Pancreas (tissue), 10 donors: ENCODE measurements at regions of chr20 and their contacts with region 1.

Region 1: DNA sequence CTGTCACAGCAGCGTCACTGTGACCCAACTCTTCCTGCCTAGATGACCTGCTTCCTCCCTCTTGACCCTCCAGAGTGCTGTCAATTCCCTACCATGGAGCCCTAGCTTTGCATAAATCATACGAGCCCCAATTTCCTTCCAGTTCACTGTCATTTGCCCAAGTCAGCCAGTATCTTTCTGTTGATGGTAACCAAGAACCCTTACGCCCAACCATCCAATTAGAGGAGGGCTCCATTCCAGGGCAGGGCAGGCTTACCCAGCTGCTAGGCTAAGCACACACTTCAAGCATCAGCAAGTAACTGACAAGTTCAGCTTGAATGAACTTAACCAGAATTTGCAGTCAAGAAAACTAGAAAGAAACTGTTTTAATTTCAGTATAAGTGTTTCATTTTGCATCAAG is 25.7 kb downstream of the WFDC3 start:
- DNase-seq: no peak
- ATAC-seq: no peak
- H3K4me3 ChIP-seq: no peak overlapping the region
- H3K27ac ChIP-seq: no peak overlapping the region
- H3K4me1 ChIP-seq: peaks cover 0 to 4% (median 0%) of the 10 kb centered on the region in 3 donors
- H3K27me3 ChIP-seq: no peaks in the 10 kb centered on the region
- CTCF ChIP-seq: no peak

Region 2: DNA sequence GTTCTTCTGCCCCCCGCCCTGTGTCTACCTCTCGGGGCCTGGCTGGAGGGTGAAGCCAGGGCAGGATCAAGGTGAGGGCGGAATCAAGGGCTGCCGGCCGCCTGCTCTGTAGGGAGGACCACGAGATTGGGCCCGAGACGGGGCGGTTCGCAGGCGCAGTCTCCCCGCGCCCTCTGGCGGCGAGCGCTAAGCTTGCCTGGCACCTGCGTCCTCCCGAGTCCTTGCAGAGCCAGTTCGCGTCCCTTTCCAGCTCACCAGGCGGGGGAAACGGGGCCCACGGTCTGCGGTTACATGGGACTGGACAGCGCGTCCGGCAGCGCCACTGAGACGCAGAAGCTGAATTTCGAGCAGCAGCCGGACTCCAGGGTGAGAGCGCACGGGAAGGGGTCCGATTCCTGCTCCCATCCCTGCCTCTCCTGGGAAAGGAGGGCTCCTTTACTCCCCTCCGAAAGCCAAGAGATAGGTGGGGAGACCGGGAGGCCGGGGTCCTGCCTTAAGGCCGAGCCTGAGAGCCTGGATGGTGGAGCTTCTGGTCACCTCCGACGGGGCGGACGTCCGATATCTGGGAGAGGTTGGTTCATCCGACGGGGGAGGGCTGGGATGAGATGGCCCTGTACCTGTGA is 454.3 kb before region 1 on chr20:
- intact Hi-C with region 1: loop called in 2 of 3 experiments (anchors 5 to 10 kb)
- DNase-seq: peak; percentile 71 to 93 (median 85)
- ATAC-seq: peak; percentile 48 to 73 (median 59)
- H3K4me3 ChIP-seq: peak overlapping the region in 3 of 4 donors; percentile 48 to 64 (median 60)
- H3K27ac ChIP-seq: no peak overlapping the region
- H3K4me1 ChIP-seq: no peaks in the 10 kb centered on the region
- H3K27me3 ChIP-seq: no peaks in the 10 kb centered on the region
- CTCF ChIP-seq: peak; percentile 58 to 77 (median 72)

Region 3: DNA sequence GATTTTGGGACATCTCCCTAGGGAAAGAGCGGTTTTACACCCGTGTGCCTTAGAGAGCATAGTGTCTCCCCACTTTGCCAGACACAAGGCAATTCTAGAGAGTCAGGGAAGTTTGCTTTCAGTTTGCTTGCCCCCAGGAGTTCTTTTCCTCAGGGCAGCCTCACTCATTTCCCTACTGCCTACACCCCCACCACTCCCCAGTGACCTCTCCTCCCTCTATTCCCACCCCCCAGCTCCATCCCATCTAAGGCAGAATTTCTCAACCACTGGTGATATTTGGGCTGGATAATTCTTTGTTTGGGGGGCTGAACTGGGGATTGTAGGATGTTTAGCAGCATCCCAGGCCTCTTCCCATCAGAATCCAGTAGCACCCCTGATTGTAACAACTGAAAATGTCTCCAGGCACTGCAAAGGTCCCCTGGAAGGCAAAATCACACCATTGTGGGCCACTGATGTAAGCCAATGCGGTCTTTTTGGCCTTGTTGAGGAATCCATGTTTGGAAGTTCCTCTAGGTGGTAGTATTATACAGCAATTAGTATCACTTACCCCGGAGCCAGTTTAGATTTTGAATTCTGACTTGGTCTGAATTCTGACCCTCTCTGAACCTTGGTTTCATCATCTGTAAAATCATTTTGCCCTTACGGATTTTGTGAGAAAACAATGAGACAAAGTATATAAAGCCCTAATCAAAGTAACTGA is 220.1 kb before region 1 on chr20:
- intact Hi-C with region 1: loop called in 1 of 3 experiments (anchors 10 kb)
- DNase-seq: no peak
- ATAC-seq: peak in 3 of 4 donors; percentile 73 to 75 (median 75)
- H3K4me3 ChIP-seq: no peak overlapping the region
- H3K27ac ChIP-seq: no peak overlapping the region
- H3K4me1 ChIP-seq: no peaks in the 10 kb centered on the region
- H3K27me3 ChIP-seq: no peaks in the 10 kb centered on the region
- CTCF ChIP-seq: peak in 1 of 4 donors; percentile 16

Region 4: GRCh38 chr20:45842169-45842812 is 76.3 kb after region 1 on chr20:
- intact Hi-C with region 1: no loop called
- DNase-seq: no peak
- ATAC-seq: peak in 2 of 4 donors; percentile 7 to 33
- H3K4me3 ChIP-seq: no peak overlapping the region
- H3K27ac ChIP-seq: no peak overlapping the region
- H3K4me1 ChIP-seq: no peaks in the 10 kb centered on the region
- H3K27me3 ChIP-seq: no peaks in the 10 kb centered on the region
- CTCF ChIP-seq: no peak

Region 5: DNA sequence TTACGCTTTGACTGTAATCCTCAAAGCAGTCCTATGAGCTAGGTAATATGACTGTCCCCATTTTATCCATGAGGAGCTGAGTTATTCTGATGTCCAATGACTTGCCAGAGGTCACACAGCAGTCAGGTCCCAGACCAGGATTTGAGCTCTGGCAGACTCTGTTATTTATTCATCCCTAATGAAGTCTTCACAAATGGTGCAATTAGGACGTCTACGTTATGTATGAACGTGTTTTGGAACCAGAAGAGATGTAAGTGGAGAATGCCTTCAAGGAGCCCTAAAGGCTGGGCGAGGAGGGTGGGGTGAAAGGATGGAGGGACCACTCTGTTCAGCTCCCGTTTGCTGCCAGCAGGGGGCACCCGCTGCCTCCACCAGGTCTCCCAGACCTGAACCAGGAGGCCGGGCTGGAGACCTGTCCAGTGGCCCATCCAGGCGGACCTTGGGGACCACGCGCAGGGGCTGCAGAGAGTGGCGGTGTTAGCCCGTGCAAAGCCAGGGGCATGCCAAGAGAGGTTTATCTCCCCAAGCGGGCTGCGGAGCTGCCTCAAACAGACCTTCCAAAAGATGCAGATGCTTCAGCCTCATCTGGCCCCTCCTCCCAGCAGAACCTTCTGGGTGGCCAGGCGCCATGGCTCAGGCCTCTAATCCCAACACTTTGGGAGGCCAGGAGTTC is 221.3 kb after region 1 on chr20:
- intact Hi-C with region 1: no loop called
- DNase-seq: peak in 5 of 6 donors; percentile 45 to 90 (median 80)
- ATAC-seq: peak; percentile 86 to 97 (median 94)
- H3K4me3 ChIP-seq: no peak overlapping the region
- H3K27ac ChIP-seq: no peak overlapping the region
- H3K4me1 ChIP-seq: no peaks in the 10 kb centered on the region
- H3K27me3 ChIP-seq: peaks cover 0 to 3% (median 0%) of the 10 kb centered on the region in 4 donors
- CTCF ChIP-seq: peak; percentile 66 to 83 (median 74)